Right cardiac atrium (tissue), 5 donors: ENCODE measurements at regions of chr15 and their contacts with region 1.

Region 1: DNA sequence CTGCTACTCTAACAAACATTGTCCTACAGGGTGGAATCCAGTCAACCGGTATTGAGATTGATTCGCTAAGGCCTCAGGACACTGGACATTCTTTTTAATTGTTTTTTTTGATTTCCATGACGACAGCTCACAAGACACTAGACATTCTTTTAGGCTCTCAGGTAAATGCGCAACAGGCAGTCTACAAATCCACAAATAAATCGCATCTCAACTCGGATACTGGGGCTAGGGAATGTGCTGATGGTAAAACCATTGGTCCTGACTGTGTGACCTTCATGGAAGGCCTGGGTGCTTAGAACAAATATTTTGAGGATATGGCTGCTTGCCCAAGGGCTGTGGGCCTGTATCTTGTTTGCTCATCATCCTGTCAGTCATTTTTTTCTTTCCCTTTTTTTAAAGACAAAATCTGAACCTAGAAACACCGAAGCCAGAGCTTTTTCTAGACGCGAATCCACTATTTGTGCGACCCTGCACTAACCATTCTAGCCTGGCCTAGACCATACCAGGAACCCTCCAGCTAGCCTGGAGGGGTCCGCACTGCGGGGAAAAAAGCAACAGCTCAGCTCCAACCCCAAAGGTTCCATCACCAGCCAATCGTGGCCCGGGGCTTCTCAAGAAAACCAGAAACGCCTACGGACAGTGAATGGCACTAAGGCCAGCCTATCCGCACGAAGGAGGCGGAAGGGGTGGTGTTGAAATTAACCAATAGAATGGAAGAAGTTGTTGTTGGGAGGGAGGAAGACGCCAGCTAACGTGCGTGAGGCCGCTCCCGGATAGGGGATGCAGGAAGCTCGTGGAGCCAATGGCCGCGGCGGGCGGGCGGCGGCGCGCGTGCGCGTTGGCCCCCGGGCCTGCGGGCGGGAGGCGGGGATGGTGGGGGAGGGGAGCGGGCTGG is 18.1 kb upstream of the CHD2 start:
- DNase-seq: peak; percentile 98 to 99 (median 99)
- ATAC-seq: peak; percentile 96 to 97
- H3K4me3 ChIP-seq: peak overlapping the region; percentile 43
- H3K27ac ChIP-seq: peak overlapping the region; percentile 93
- H3K4me1 ChIP-seq: peaks cover 9% of the 10 kb centered on the region
- H3K27me3 ChIP-seq: no peaks in the 10 kb centered on the region

Region 2: GRCh38 chr15:92820236-92821021 is 61.6 kb before region 1 on chr15:
- intact Hi-C with region 1: no loop called
- DNase-seq: peak; percentile 92 to 96 (median 96)
- ATAC-seq: peak; percentile 98
- H3K4me3 ChIP-seq: peak overlapping the region; percentile 65
- H3K27ac ChIP-seq: peak overlapping the region; percentile 76
- H3K4me1 ChIP-seq: no peaks in the 10 kb centered on the region
- H3K27me3 ChIP-seq: no peaks in the 10 kb centered on the region

Region 3: GRCh38 chr15:92831655-92832328 is 50.3 kb before region 1 on chr15:
- intact Hi-C with region 1: loop called in 3 of 4 experiments (anchors 2 to 5 kb)
- DNase-seq: peak; percentile 93 to 97 (median 97)
- ATAC-seq: peak; percentile 99
- H3K4me3 ChIP-seq: peak overlapping the region; percentile 31
- H3K27ac ChIP-seq: peak overlapping the region; percentile 86
- H3K4me1 ChIP-seq: peaks cover 3% of the 10 kb centered on the region
- H3K27me3 ChIP-seq: no peaks in the 10 kb centered on the region

Region 4: GRCh38 chr15:92954578-92954977 is 72.5 kb after region 1 on chr15:
- intact Hi-C with region 1: no loop called
- DNase-seq: no peak
- ATAC-seq: no peak
- H3K4me3 ChIP-seq: no peak overlapping the region
- H3K27ac ChIP-seq: no peak overlapping the region
- H3K4me1 ChIP-seq: no peaks in the 10 kb centered on the region
- H3K27me3 ChIP-seq: no peaks in the 10 kb centered on the region